ENCODE measurements at regions of chr3 and their contacts with region 1.

Region 1: GRCh38 chr3:134600685-134601463 is 49.9 kb downstream of the KY start:
- DNase-seq: peak; percentile 66
- H3K4me3 ChIP-seq: no peak overlapping the region
- H3K27ac ChIP-seq: no peak overlapping the region
- H3K4me1 ChIP-seq: no peaks in the 10 kb centered on the region
- H3K27me3 ChIP-seq: no peaks in the 10 kb centered on the region
- CTCF ChIP-seq: peak; percentile 96

Region 2: DNA sequence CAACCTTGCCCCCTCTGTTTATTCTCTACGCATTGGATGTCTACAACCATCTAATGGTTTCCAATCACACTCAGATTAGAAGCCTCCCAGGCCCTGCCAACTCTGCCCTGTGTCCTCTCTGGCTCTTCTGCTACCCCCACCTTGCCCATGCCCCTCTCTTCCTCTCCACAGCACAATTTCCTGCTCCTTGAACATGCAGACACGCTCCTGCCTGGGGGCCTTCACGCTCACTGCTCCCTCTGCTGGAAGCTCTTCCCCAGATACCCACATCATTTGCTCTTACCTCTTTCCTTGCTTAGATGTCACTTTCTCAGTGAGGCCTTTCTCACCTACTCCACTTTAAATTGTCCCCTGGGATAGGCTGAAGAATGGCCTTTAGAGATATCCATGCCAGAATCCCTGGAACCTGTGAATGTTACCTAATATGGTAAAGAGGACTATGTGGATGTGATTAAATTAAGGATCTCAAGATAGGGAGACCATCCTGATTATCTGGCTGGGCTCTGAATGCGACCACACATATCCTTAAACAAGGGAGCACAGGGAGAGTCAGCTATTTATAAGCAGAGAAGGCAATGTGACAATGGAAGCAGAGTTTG is 40.1 kb after region 1 on chr3:
- intact Hi-C with region 1: loop called (anchors 5 kb)
- DNase-seq: peak; percentile 22
- H3K4me3 ChIP-seq: no peak overlapping the region
- H3K27ac ChIP-seq: no peak overlapping the region
- H3K4me1 ChIP-seq: no peaks in the 10 kb centered on the region
- H3K27me3 ChIP-seq: no peaks in the 10 kb centered on the region
- CTCF ChIP-seq: peak; percentile 27

Region 3: DNA sequence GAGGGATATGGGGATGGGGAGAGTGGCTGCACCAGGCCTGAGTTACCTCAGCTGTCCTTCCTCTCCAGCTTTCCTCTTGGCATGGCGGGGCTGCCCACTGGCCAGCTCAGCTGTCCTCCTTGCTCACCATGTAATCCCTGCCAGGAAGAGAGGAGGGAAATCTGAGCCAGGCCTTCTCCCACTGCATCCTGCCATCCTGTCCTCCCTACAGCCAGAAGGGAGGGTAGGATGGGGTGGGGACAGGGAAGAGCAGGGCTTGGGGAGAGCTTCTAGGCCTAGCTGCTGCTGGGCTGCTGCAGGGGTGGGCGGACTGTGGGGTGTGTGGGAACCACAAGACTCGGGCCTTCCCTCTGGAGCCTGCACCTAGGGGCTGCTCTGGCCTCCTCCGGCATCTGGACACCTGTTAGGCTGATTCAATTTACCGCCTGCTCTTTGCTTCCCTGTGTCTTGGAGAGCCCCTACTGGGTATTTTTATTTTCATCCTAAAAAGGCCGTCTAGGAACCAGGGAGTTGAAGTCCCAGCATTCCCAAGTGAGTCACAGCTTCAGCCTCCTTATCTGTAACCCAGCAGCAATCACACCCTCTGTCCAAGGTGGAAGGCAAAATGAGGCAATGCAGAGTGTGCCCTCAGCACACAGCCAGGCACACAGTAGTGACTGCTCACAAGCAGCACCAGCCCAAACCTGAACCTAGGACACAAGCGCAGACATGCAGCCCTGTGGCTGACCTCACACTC is 63.0 kb after region 1 on chr3:
- intact Hi-C with region 1: no loop called
- DNase-seq: no peak
- H3K4me3 ChIP-seq: no peak overlapping the region
- H3K27ac ChIP-seq: no peak overlapping the region
- H3K4me1 ChIP-seq: no peaks in the 10 kb centered on the region
- H3K27me3 ChIP-seq: no peaks in the 10 kb centered on the region
- CTCF ChIP-seq: no peak

Region 4: GRCh38 chr3:134754768-134755559 is 154.1 kb after region 1 on chr3:
- intact Hi-C with region 1: loop called (anchors 5 kb)
- DNase-seq: peak; percentile 33
- H3K4me3 ChIP-seq: no peak overlapping the region
- H3K27ac ChIP-seq: no peak overlapping the region
- H3K4me1 ChIP-seq: no peaks in the 10 kb centered on the region
- H3K27me3 ChIP-seq: no peaks in the 10 kb centered on the region
- CTCF ChIP-seq: peak; percentile 51

Region 5: GRCh38 chr3:134824791-134825190 is 223.9 kb after region 1 on chr3:
- intact Hi-C with region 1: no loop called
- DNase-seq: no peak
- H3K4me3 ChIP-seq: no peak overlapping the region
- H3K27ac ChIP-seq: no peak overlapping the region
- H3K4me1 ChIP-seq: no peaks in the 10 kb centered on the region
- H3K27me3 ChIP-seq: no peaks in the 10 kb centered on the region
- CTCF ChIP-seq: no peak

Region 6: DNA sequence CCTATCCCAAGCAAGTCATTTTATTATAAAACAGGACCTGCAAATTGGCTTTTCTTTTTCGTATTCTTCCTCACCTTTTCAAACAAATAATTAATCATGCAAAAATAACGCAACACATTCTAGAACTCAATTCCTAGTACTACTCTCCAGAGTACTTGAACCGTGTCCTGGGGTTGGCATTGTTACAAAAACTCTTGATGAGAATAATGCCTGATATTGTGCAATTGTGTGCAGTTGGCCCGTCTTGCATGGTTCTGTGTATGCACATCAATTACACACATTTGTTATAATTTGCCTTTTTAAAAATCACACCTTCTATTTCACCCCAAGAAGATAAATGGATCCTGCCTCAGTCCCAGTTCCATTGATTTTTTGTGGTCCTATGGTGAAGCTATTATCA is 399.6 kb after region 1 on chr3:
- intact Hi-C with region 1: no loop called
- DNase-seq: no peak
- H3K4me3 ChIP-seq: no peak overlapping the region
- H3K27ac ChIP-seq: no peak overlapping the region
- H3K4me1 ChIP-seq: no peaks in the 10 kb centered on the region
- H3K27me3 ChIP-seq: no peaks in the 10 kb centered on the region
- CTCF ChIP-seq: no peak

Region 7: DNA sequence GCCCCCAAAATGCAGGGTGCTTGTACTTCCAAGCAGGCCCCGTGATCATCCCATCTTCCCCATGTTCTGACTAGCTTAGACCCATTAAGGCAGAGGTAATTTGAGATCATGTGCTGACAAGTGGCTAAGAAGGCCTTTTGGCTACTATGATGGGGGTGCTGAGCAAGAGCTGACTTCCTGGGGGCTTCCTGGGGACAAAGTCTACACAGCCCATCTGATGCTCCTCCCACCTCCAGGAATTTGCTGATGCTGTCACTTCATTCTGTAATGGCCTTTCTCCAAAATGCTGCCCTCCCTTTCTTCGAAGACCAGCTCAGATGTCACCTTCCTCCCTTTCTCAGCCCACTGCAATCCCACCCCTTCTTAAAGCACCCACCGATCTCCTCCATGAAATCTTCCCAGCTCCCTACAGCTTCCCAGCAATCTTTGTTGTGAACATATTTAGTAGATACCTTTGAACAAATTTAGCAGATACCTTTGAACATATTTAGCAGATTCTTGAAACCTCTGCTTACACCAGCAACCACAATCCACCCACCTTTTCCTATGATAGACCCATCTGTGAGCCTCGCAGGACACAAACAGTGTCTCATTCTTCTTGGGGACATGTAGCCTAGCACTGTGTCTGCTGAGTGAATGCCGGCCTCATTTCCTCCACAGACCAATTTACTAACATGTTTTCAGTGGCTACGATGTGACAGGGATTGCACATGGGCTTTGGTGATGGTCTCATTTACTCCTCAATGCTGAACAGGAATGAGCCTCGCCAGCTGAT is 417.5 kb after region 1 on chr3:
- intact Hi-C with region 1: no loop called
- DNase-seq: no peak
- H3K4me3 ChIP-seq: no peak overlapping the region
- H3K27ac ChIP-seq: no peak overlapping the region
- H3K4me1 ChIP-seq: no peaks in the 10 kb centered on the region
- H3K27me3 ChIP-seq: no peaks in the 10 kb centered on the region
- CTCF ChIP-seq: no peak